CD8-positive, alpha-beta T cell (primary cell): ENCODE measurements at regions of chr3 and their contacts with region 1.

Region 1: DNA sequence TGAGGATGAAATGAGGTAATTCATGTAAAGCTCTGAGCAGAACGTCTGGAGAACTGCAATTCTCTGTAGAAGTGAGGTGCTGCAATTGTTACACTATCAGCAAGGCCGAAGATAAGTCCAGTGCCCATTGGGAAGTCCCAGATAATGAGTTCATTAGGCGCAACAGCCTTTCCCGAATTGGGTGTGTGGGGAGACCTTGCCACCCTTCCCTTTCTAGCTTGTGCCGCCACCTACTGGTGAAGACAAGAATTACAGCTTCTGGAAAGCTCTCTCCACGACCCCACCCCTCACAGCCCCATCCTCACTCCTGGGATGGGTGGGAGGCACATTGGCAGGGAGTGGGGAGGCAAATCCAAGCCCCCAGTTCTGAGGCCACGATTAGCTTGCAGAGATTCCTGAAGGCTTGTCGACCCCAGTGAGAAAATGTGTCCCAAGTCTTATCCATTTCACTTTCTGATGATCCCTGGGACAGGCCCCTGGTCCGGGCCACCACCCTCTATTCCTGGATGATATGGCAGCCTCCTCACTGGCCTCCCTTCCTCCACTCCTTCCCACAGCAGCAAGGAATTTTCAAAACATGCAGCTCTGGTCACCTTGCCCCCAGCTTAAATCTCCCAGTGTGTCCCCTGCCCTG is 36.4 kb downstream of the FAM3D start:
- DNase-seq: peak; percentile 16 to 72 (median 57)
- ATAC-seq: peak; percentile 56
- H3K4me3 ChIP-seq: no peak overlapping the region
- H3K4me3 Mint-ChIP-seq: no peak overlapping the region
- H3K27ac ChIP-seq: no peak overlapping the region
- H3K27ac Mint-ChIP-seq: no peak overlapping the region
- H3K4me1 ChIP-seq: no peaks in the 10 kb centered on the region
- H3K4me1 Mint-ChIP-seq: no peaks in the 10 kb centered on the region
- H3K27me3 ChIP-seq: no peaks in the 10 kb centered on the region
- H3K27me3 Mint-ChIP-seq: peaks cover 12% of the 10 kb centered on the region
- CTCF ChIP-seq: peak; percentile 74

Region 2: GRCh38 chr3:57652203-57652602 is 978.0 kb before region 1 on chr3:
- CTCF ChIA-PET with region 1: no interaction called
- POLR2A ChIA-PET with region 1: no interaction called
- intact Hi-C with region 1: no loop called
- DNase-seq: no peak
- ATAC-seq: no peak
- H3K4me3 ChIP-seq: no peak overlapping the region
- H3K4me3 Mint-ChIP-seq: no peak overlapping the region
- H3K27ac ChIP-seq: no peak overlapping the region
- H3K27ac Mint-ChIP-seq: no peak overlapping the region
- H3K4me1 ChIP-seq: no peaks in the 10 kb centered on the region
- H3K4me1 Mint-ChIP-seq: peaks cover 17% of the 10 kb centered on the region
- H3K27me3 ChIP-seq: no peaks in the 10 kb centered on the region
- H3K27me3 Mint-ChIP-seq: no peaks in the 10 kb centered on the region
- CTCF ChIP-seq: no peak

Region 3: GRCh38 chr3:58188173-58188564 is 442.0 kb before region 1 on chr3:
- CTCF ChIA-PET with region 1: interaction called, 3 read pairs
- POLR2A ChIA-PET with region 1: no interaction called
- intact Hi-C with region 1: loop called in 1 of 2 experiments (anchors 5 kb)
- DNase-seq: no peak
- ATAC-seq: no peak
- H3K4me3 ChIP-seq: no peak overlapping the region
- H3K4me3 Mint-ChIP-seq: no peak overlapping the region
- H3K27ac ChIP-seq: no peak overlapping the region
- H3K27ac Mint-ChIP-seq: no peak overlapping the region
- H3K4me1 ChIP-seq: no peaks in the 10 kb centered on the region
- H3K4me1 Mint-ChIP-seq: no peaks in the 10 kb centered on the region
- H3K27me3 ChIP-seq: no peaks in the 10 kb centered on the region
- H3K27me3 Mint-ChIP-seq: no peaks in the 10 kb centered on the region
- CTCF ChIP-seq: no peak

Region 4: GRCh38 chr3:58463181-58463941 is 166.8 kb before region 1 on chr3:
- CTCF ChIA-PET with region 1: interaction called, 5 read pairs
- POLR2A ChIA-PET with region 1: no interaction called
- intact Hi-C with region 1: loop called (anchors 5 to 10 kb)
- DNase-seq: peak; percentile 19 to 83 (median 73)
- ATAC-seq: peak; percentile 95
- H3K4me3 ChIP-seq: peak overlapping the region in 1 of 2 experiments; percentile 3
- H3K4me3 Mint-ChIP-seq: peak overlapping the region; percentile 51
- H3K27ac ChIP-seq: no peak overlapping the region
- H3K27ac Mint-ChIP-seq: no peak overlapping the region
- H3K4me1 ChIP-seq: peaks cover 8% of the 10 kb centered on the region
- H3K4me1 Mint-ChIP-seq: peaks cover 8% of the 10 kb centered on the region
- H3K27me3 ChIP-seq: no peaks in the 10 kb centered on the region
- H3K27me3 Mint-ChIP-seq: no peaks in the 10 kb centered on the region
- CTCF ChIP-seq: peak; percentile 80

Region 5: GRCh38 chr3:58544541-58544940 is 85.7 kb before region 1 on chr3:
- CTCF ChIA-PET with region 1: no interaction called
- POLR2A ChIA-PET with region 1: no interaction called
- intact Hi-C with region 1: no loop called
- DNase-seq: no peak
- ATAC-seq: no peak
- H3K4me3 ChIP-seq: no peak overlapping the region
- H3K4me3 Mint-ChIP-seq: no peak overlapping the region
- H3K27ac ChIP-seq: no peak overlapping the region
- H3K27ac Mint-ChIP-seq: no peak overlapping the region
- H3K4me1 ChIP-seq: no peaks in the 10 kb centered on the region
- H3K4me1 Mint-ChIP-seq: no peaks in the 10 kb centered on the region
- H3K27me3 ChIP-seq: no peaks in the 10 kb centered on the region
- H3K27me3 Mint-ChIP-seq: peaks cover 1% of the 10 kb centered on the region
- CTCF ChIP-seq: no peak

Region 6: DNA sequence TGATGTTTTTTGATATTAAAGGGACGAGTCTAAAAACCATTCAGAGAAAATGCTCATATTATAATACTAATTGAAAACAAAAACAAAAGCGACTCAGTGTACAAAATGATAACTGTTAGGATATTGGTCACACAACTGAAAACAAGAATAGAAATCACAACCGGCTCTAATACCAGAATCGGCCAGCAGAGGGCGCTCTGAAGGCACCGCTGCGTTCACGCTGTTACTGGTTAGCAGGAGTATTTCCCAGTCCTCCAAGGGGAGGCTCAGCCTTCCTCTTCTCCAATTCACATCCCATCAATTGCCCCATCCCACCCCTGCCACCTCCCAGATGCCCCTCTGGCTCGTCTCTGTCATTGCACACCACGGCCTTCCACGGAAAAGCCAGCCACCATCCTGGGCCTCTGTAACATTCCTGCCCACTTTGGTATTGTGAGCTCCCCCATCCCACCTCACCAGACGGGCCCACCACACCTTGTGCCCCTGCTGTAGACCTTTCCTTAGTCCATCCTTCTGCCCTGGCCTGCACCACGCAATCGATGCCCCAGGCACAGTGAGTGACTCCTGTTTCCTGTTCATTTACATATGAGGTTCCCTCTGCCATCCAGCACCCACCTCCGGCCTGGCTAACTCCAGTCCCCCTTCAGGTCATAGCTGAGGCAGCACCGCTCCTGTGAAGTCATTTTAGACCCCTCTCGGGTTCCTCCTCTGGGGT is 61.5 kb before region 1 on chr3:
- CTCF ChIA-PET with region 1: interaction called, 40 read pairs
- POLR2A ChIA-PET with region 1: no interaction called
- intact Hi-C with region 1: loop called in 1 of 2 experiments (anchors 2 kb)
- DNase-seq: peak; percentile 44 to 82 (median 61)
- ATAC-seq: no peak
- H3K4me3 ChIP-seq: no peak overlapping the region
- H3K4me3 Mint-ChIP-seq: no peak overlapping the region
- H3K27ac ChIP-seq: no peak overlapping the region
- H3K27ac Mint-ChIP-seq: no peak overlapping the region
- H3K4me1 ChIP-seq: no peaks in the 10 kb centered on the region
- H3K4me1 Mint-ChIP-seq: peaks cover 6% of the 10 kb centered on the region
- H3K27me3 ChIP-seq: no peaks in the 10 kb centered on the region
- H3K27me3 Mint-ChIP-seq: peaks cover 4% of the 10 kb centered on the region
- CTCF ChIP-seq: peak; percentile 96

Region 7: GRCh38 chr3:58608648-58609047 is 21.5 kb before region 1 on chr3:
- CTCF ChIA-PET with region 1: no interaction called
- POLR2A ChIA-PET with region 1: no interaction called
- intact Hi-C with region 1: no loop called
- DNase-seq: no peak
- ATAC-seq: no peak
- H3K4me3 ChIP-seq: no peak overlapping the region
- H3K4me3 Mint-ChIP-seq: no peak overlapping the region
- H3K27ac ChIP-seq: no peak overlapping the region
- H3K27ac Mint-ChIP-seq: no peak overlapping the region
- H3K4me1 ChIP-seq: no peaks in the 10 kb centered on the region
- H3K4me1 Mint-ChIP-seq: no peaks in the 10 kb centered on the region
- H3K27me3 ChIP-seq: peaks cover 0 to 3% of the 10 kb centered on the region in 2 experiments
- H3K27me3 Mint-ChIP-seq: peaks cover 17% of the 10 kb centered on the region
- CTCF ChIP-seq: no peak

Region 8: DNA sequence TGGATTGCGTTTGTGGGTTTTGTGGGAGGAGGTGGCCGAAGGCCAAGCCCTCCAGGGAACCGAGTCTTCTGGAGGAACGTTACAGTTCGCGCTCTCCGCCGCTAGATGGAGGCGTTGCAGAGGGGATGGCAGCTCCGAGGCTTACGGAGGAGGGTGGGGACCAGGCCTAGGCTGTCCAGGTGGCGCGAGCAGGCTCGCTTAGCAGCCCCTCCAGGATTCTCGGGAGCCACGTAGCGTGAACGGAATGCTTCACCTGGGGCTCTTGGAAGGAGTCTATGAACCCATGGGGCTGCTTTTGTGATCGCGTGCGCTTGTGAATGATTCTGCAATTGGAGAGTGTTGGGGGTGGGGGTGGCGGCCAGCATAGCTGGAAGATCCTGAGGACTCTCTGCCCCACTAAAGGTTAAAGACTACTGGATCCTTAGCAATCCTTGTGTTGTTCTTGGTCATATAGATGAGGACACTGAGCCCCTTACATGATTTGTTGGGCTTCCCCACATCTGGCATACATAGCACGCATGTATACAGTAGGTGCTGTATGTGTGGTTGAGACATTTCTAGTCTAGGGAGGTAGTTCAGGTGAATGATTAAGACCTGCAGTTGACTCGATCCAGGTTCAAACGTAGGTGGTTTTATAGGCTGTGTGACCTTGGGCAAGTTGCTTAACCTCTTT is 10.6 kb after region 1 on chr3:
- CTCF ChIA-PET with region 1: interaction called, 22 read pairs
- POLR2A ChIA-PET with region 1: no interaction called
- intact Hi-C with region 1: no loop called
- DNase-seq: peak; percentile 10 to 61 (median 37)
- ATAC-seq: no peak
- H3K4me3 ChIP-seq: no peak overlapping the region
- H3K4me3 Mint-ChIP-seq: no peak overlapping the region
- H3K27ac ChIP-seq: no peak overlapping the region
- H3K27ac Mint-ChIP-seq: no peak overlapping the region
- H3K4me1 ChIP-seq: peaks cover 5% of the 10 kb centered on the region
- H3K4me1 Mint-ChIP-seq: no peaks in the 10 kb centered on the region
- H3K27me3 ChIP-seq: no peaks in the 10 kb centered on the region
- H3K27me3 Mint-ChIP-seq: peaks cover 1% of the 10 kb centered on the region
- CTCF ChIP-seq: peak; percentile 54